CD8-positive, alpha-beta T cell (primary cell): ENCODE measurements at regions of chr7 and their contacts with region 1.

Region 1: DNA sequence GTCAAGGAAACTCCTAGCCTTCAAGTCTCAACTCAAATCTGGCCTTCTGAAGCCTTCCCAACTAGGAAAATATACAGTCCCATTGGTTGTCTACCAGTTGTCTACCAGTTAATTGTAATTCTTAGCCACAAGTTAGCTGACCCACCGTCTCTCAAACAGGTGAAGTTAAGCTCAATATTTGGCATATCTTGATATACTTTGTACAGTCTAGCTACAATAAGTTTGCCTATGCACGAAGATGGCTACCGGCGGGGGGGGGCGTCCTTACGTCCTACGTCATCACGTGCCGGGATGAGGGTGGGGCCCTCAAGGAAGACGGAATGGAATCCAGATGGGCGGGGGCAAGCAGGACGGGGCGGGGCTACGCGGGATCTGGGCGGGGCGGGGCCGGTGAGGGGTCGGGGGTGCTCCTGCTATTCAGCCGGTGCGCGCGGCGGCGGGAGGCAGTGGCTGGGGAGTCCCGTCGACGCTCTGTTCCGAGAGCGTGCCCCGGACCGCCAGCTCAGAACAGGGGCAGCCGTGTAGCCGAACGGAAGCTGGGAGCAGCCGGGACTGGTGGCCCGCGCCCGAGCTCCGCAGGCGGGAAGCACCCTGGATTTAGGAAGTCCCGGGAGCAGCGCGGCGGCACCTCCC is at the start of gene AHR:
- DNase-seq: peak; percentile 74 to 94 (median 88)
- ATAC-seq: peak; percentile 80
- H3K4me3 ChIP-seq: peak within 1 kb of the TSS; percentile 50 to 69
- H3K4me3 Mint-ChIP-seq: peak within 1 kb of the TSS; percentile 92
- H3K27ac ChIP-seq: peak within 1 kb of the TSS; percentile 73
- H3K27ac Mint-ChIP-seq: peak within 1 kb of the TSS; percentile 92
- H3K4me1 ChIP-seq: peaks cover 26% of the 10 kb centered on the region
- H3K4me1 Mint-ChIP-seq: peaks cover 35% of the 10 kb centered on the region
- H3K27me3 ChIP-seq: peaks cover 0 to 1% of the 10 kb centered on the region in 2 experiments
- H3K27me3 Mint-ChIP-seq: no peaks in the 10 kb centered on the region
- CTCF ChIP-seq: no peak
- total RNA-seq, gene AHR: 54.0 to 54.1 TPM

Region 2: GRCh38 chr7:16634271-16634738 is 664.0 kb before region 1 on chr7:
- CTCF ChIA-PET with region 1: no interaction called
- POLR2A ChIA-PET with region 1: no interaction called
- intact Hi-C with region 1: loop called in 1 of 2 experiments (anchors 2 kb)
- DNase-seq: no peak
- ATAC-seq: no peak
- H3K4me3 ChIP-seq: no peak overlapping the region
- H3K4me3 Mint-ChIP-seq: no peak overlapping the region
- H3K27ac ChIP-seq: no peak overlapping the region
- H3K27ac Mint-ChIP-seq: no peak overlapping the region
- H3K4me1 ChIP-seq: no peaks in the 10 kb centered on the region
- H3K4me1 Mint-ChIP-seq: peaks cover 2% of the 10 kb centered on the region
- H3K27me3 ChIP-seq: no peaks in the 10 kb centered on the region
- H3K27me3 Mint-ChIP-seq: no peaks in the 10 kb centered on the region
- CTCF ChIP-seq: no peak

Region 3: GRCh38 chr7:16982640-16983350 is 315.5 kb before region 1 on chr7:
- CTCF ChIA-PET with region 1: interaction called, 20 read pairs
- POLR2A ChIA-PET with region 1: no interaction called
- intact Hi-C with region 1: loop called (anchors 1 to 2 kb)
- DNase-seq: peak in 4 of 9 experiments; percentile 6 to 65 (median 36)
- ATAC-seq: peak; percentile 69
- H3K4me3 ChIP-seq: no peak overlapping the region
- H3K4me3 Mint-ChIP-seq: no peak overlapping the region
- H3K27ac ChIP-seq: no peak overlapping the region
- H3K27ac Mint-ChIP-seq: no peak overlapping the region
- H3K4me1 ChIP-seq: no peaks in the 10 kb centered on the region
- H3K4me1 Mint-ChIP-seq: peaks cover 2% of the 10 kb centered on the region
- H3K27me3 ChIP-seq: peaks cover 0 to 2% of the 10 kb centered on the region in 2 experiments
- H3K27me3 Mint-ChIP-seq: peaks cover 11% of the 10 kb centered on the region
- CTCF ChIP-seq: peak; percentile 99

Region 4: GRCh38 chr7:17063045-17063383 is 235.3 kb before region 1 on chr7:
- CTCF ChIA-PET with region 1: interaction called, 4 read pairs
- POLR2A ChIA-PET with region 1: no interaction called
- intact Hi-C with region 1: loop called (anchors 1 to 5 kb)
- DNase-seq: peak in 1 of 9 experiments; percentile 5
- ATAC-seq: no peak
- H3K4me3 ChIP-seq: no peak overlapping the region
- H3K4me3 Mint-ChIP-seq: no peak overlapping the region
- H3K27ac ChIP-seq: no peak overlapping the region
- H3K27ac Mint-ChIP-seq: no peak overlapping the region
- H3K4me1 ChIP-seq: no peaks in the 10 kb centered on the region
- H3K4me1 Mint-ChIP-seq: no peaks in the 10 kb centered on the region
- H3K27me3 ChIP-seq: no peaks in the 10 kb centered on the region
- H3K27me3 Mint-ChIP-seq: no peaks in the 10 kb centered on the region
- CTCF ChIP-seq: no peak

Region 5: DNA sequence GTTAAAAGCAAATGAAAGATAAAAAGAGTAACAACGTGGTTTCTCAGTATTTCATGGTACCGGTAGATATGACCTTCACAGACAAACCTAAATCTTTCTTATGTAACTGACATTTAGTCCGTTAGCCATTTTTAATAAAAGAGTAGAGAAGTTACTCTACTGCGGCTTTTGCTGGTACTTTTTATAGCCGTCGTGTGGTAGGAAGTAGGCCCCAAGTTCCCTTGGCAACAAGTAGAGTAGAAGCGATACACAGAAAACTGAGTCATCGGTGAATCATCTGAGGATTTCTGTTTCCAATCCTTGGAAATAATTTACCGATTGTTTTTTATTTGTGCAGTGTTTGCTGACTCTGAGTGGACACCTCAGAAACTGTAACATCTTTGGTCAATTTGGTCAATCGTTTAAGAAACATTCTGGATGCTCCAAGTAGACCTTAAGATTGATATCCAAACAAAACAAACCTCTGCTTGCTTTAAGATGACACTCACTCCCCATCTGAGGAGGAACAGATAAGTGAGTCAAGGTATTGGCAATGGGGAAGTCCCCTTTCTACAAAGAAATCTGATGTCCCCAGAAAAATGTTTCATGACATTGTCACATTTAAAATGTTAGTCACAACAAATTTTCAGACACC is 63.8 kb before region 1 on chr7:
- CTCF ChIA-PET with region 1: no interaction called
- POLR2A ChIA-PET with region 1: interaction called, 5 read pairs
- intact Hi-C with region 1: loop called (anchors 1 to 2 kb)
- DNase-seq: peak; percentile 22 to 93 (median 59)
- ATAC-seq: peak; percentile 81
- H3K4me3 ChIP-seq: peak overlapping the region; percentile 11 to 19
- H3K4me3 Mint-ChIP-seq: peak overlapping the region; percentile 67
- H3K27ac ChIP-seq: peak overlapping the region; percentile 62 to 93
- H3K27ac Mint-ChIP-seq: peak overlapping the region; percentile 96
- H3K4me1 ChIP-seq: peaks cover 24% of the 10 kb centered on the region
- H3K4me1 Mint-ChIP-seq: peaks cover 28% of the 10 kb centered on the region
- H3K27me3 ChIP-seq: no peaks in the 10 kb centered on the region
- H3K27me3 Mint-ChIP-seq: no peaks in the 10 kb centered on the region
- CTCF ChIP-seq: no peak

Region 6: DNA sequence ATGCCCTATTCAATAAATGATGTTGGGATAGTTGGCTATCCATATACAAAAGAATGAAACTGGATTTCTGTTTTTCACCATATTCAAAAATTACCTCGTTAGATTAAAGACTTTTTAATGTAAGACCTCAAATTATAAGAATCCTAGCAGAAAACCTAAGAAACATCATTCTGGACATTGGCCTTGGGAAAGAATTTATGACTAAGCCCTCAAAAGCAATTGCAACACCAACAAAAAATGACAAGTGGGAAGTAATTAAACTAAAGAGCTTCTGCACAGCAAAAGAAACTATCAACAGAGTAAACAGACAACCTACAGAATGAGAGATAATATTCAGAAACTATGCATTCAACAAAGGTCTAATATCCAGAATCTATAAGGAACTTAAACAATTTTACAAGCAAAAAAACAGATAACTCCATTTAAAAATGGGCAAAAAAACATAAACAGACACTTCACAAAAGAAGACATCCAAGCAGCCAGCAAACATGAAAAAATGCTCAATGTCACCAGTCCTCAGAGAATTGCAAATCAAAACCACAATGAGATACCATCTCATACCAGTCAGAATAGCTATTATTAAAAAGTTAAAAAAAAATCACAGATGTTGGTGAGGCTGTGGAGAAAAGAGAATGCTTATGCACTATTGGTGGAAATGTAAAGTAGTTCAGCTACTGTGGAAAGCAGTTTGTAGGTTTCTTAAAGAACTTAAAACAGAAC is 310.0 kb after region 1 on chr7:
- CTCF ChIA-PET with region 1: no interaction called
- POLR2A ChIA-PET with region 1: no interaction called
- intact Hi-C with region 1: no loop called
- DNase-seq: no peak
- ATAC-seq: no peak
- H3K4me3 ChIP-seq: no peak overlapping the region
- H3K4me3 Mint-ChIP-seq: no peak overlapping the region
- H3K27ac ChIP-seq: no peak overlapping the region
- H3K27ac Mint-ChIP-seq: no peak overlapping the region
- H3K4me1 ChIP-seq: no peaks in the 10 kb centered on the region
- H3K4me1 Mint-ChIP-seq: no peaks in the 10 kb centered on the region
- H3K27me3 ChIP-seq: no peaks in the 10 kb centered on the region
- H3K27me3 Mint-ChIP-seq: peaks cover 5% of the 10 kb centered on the region
- CTCF ChIP-seq: no peak